ENCODE measurements at regions of chr1 and their contacts with region 1.

Region 1: GRCh38 chr1:26700711-26701110 is 4.9 kb downstream of the ARID1A start:
- DNase-seq: no peak
- ATAC-seq: no peak
- H3K4me3 ChIP-seq: peak overlapping the region in 4 of 12 donors; percentile 5 to 94 (median 18)
- H3K27ac ChIP-seq: peak overlapping the region in 4 of 12 donors; percentile 2 to 21 (median 12)
- H3K4me1 ChIP-seq: peaks cover 21 to 76% (median 73%) of the 10 kb centered on the region in 12 donors
- H3K27me3 ChIP-seq: no peaks in the 10 kb centered on the region
- CTCF ChIP-seq: no peak
- POLR2A ChIP-seq: no peak

Region 2: DNA sequence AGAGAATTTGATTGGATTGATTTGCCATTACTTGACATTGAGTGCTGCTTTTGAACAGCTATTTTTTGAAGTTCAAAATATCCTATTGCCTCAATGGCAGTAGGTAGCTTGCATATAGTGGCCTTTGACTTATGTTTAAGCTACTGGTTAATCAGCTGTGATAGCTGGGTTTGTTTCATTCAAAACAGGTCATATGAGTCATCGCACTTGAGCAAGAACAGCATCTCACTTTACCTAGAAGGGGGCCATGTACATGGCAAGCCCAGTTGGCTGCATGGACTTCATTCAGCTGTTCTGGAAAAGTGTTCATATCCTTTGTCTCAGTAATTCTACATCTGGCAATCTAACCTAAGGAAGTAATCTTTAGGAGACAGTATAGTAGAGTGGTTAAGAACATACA is 33.9 kb before region 1 on chr1:
- intact Hi-C with region 1: no loop called
- DNase-seq: no peak
- ATAC-seq: no peak
- H3K4me3 ChIP-seq: no peak overlapping the region
- H3K27ac ChIP-seq: no peak overlapping the region
- H3K4me1 ChIP-seq: no peaks in the 10 kb centered on the region
- H3K27me3 ChIP-seq: no peaks in the 10 kb centered on the region
- CTCF ChIP-seq: no peak
- POLR2A ChIP-seq: no peak

Region 3: DNA sequence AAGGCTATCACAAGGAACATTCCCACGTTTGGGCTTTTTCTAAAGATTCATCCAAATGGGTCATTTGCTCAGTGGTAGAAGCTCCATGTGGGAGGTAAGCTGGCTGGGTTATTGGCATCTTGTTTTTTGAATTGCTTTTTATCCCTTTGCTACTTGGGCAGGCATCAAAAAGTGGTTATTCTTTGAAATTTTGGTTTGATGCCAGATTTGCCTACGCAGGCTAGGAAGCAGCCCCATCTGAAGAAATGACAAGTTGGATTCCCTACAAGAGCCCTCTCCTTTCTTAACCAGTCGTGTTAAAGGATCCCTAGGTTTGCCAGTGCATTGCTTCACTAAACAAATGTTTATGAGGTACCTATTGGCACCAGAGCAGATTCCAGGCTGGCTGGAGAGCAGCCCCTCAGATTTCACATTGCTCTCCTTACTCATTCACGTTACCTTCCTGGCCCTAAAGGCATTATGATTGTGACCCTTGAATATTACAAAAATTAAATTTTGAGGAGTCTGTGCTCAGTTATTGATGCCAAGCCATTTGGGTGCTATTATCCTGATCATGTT is 33.9 kb after region 1 on chr1:
- intact Hi-C with region 1: loop called in 1 of 10 experiments (anchors 5 kb)
- DNase-seq: no peak
- ATAC-seq: no peak
- H3K4me3 ChIP-seq: no peak overlapping the region
- H3K27ac ChIP-seq: peak overlapping the region in 2 of 12 donors; percentile 23 to 25
- H3K4me1 ChIP-seq: peaks cover 3 to 45% (median 26%) of the 10 kb centered on the region in 12 donors
- H3K27me3 ChIP-seq: no peaks in the 10 kb centered on the region
- CTCF ChIP-seq: no peak
- POLR2A ChIP-seq: no peak

Region 4: DNA sequence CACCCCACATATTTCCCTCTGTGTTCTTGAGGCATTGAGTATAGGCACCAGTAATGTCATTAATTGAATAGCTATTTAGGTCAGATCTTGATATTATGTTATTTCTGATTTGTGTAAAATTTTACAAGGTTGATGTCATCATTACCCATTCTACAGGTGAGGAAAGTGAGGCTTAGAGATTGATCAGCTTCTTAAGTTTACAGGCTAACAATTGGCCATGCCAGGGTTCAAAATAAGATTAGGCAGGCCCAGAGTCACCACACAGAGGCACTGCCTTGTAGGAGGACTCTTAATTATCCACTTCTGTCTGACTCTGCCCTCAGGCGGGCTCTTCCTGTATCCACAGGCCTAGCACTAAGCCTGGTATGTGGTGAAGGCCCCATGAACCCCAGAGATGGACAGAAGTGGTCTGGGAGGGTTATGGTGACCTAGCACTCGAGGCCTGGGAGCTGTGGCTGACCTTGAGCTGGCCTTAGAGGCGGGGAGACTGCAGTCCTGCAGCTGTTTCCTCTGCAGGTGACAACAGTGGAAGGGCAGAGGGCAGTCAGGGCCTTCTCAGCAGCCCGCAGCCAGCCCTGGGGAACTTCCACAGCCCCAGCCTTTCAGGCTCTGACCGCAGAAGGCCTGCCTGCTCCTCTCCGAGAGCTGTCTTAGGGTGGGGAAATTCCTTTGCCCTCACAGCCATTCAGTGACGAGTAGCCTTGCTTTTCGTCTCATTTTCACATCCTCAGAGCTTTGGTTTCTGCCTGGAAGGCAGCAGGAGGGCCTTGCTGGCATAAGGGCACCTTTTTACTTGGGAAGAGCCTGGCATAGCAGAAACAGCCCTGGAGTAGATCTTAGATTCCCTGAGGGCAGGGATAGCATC is 138.0 kb after region 1 on chr1:
- intact Hi-C with region 1: no loop called
- DNase-seq: peak in 1 of 5 donors; percentile 51
- ATAC-seq: peak in 1 of 4 donors; percentile 41
- H3K4me3 ChIP-seq: no peak overlapping the region
- H3K27ac ChIP-seq: peak overlapping the region in 1 of 12 donors; percentile 45
- H3K4me1 ChIP-seq: peaks cover 0 to 26% (median 0%) of the 10 kb centered on the region in 12 donors
- H3K27me3 ChIP-seq: no peaks in the 10 kb centered on the region
- CTCF ChIP-seq: no peak
- POLR2A ChIP-seq: no peak

Region 5: GRCh38 chr1:26970810-26971209 is 270.1 kb after region 1 on chr1:
- intact Hi-C with region 1: no loop called
- DNase-seq: peak in 1 of 5 donors; percentile 7
- ATAC-seq: no peak
- H3K4me3 ChIP-seq: no peak overlapping the region
- H3K27ac ChIP-seq: no peak overlapping the region
- H3K4me1 ChIP-seq: no peaks in the 10 kb centered on the region
- H3K27me3 ChIP-seq: peaks cover 0 to 16% (median 0%) of the 10 kb centered on the region in 9 donors
- CTCF ChIP-seq: no peak
- POLR2A ChIP-seq: no peak